ENCODE measurements at regions of chr20 and their contacts with region 1.

Region 1: GRCh38 chr20:53216856-53217576 is 244.9 kb downstream of the TSHZ2 start:
- DNase-seq: peak; percentile 54
- H3K4me3 Mint-ChIP-seq: peak overlapping the region; percentile 30
- H3K27ac Mint-ChIP-seq: no peak overlapping the region
- H3K4me1 Mint-ChIP-seq: no peaks in the 10 kb centered on the region
- H3K27me3 Mint-ChIP-seq: no peaks in the 10 kb centered on the region
- CTCF ChIP-seq: peak; percentile 89

Region 2: GRCh38 chr20:52379723-52380336 is 837.2 kb before region 1 on chr20:
- CTCF ChIA-PET with region 1: interaction called, 3 read pairs
- POLR2A ChIA-PET with region 1: no interaction called
- intact Hi-C with region 1: loop called (anchors 2 kb)
- DNase-seq: peak; percentile 36
- H3K4me3 Mint-ChIP-seq: no peak overlapping the region
- H3K27ac Mint-ChIP-seq: no peak overlapping the region
- H3K4me1 Mint-ChIP-seq: no peaks in the 10 kb centered on the region
- H3K27me3 Mint-ChIP-seq: peaks cover 21% of the 10 kb centered on the region
- CTCF ChIP-seq: peak; percentile 88

Region 3: DNA sequence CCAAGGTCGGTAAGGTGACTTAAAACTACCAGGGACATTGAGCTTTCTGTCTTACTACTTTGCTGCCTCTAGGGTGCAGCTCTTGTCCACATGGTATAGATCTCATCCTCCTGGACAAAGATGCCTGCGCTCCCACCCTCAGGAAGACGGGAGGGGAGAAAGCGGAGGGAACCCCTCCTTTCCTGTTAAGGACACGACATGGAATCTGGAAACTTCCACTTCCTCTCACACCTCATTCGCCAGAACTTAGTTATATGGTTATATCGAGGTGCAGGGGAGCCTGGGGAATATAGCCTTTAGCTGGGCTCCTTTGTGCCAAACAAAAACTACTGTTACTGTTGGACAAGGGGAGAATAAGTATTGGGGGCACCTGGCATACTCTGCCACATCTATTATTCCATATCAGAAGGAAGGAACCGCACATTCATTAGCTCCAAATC is 469.2 kb before region 1 on chr20:
- CTCF ChIA-PET with region 1: interaction called, 29 read pairs
- POLR2A ChIA-PET with region 1: no interaction called
- intact Hi-C with region 1: loop called (anchors 1 kb)
- DNase-seq: peak; percentile 13
- H3K4me3 Mint-ChIP-seq: no peak overlapping the region
- H3K27ac Mint-ChIP-seq: no peak overlapping the region
- H3K4me1 Mint-ChIP-seq: no peaks in the 10 kb centered on the region
- H3K27me3 Mint-ChIP-seq: peaks cover 16% of the 10 kb centered on the region
- CTCF ChIP-seq: peak; percentile 47

Region 4: DNA sequence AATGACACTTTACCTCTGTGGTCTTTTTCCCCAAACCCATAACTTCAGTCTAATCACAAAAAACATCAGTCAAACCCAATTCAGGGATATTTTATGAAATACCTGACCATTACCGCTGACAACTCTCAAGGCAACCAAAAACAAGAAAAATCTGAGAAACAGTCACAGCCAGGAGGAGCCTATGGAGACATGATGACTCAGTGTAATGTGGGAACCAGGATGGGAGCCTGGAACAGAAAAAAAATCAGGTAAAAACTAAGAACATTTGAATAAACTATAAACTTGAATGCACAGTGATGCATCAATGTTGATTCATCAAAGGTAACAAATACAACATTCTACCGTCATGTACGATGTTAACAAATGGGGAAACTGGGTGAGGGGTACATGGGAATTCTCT is 328.9 kb before region 1 on chr20:
- CTCF ChIA-PET with region 1: no interaction called
- POLR2A ChIA-PET with region 1: no interaction called
- intact Hi-C with region 1: no loop called
- DNase-seq: no peak
- H3K4me3 Mint-ChIP-seq: no peak overlapping the region
- H3K27ac Mint-ChIP-seq: no peak overlapping the region
- H3K4me1 Mint-ChIP-seq: no peaks in the 10 kb centered on the region
- H3K27me3 Mint-ChIP-seq: no peaks in the 10 kb centered on the region
- CTCF ChIP-seq: no peak

Region 5: DNA sequence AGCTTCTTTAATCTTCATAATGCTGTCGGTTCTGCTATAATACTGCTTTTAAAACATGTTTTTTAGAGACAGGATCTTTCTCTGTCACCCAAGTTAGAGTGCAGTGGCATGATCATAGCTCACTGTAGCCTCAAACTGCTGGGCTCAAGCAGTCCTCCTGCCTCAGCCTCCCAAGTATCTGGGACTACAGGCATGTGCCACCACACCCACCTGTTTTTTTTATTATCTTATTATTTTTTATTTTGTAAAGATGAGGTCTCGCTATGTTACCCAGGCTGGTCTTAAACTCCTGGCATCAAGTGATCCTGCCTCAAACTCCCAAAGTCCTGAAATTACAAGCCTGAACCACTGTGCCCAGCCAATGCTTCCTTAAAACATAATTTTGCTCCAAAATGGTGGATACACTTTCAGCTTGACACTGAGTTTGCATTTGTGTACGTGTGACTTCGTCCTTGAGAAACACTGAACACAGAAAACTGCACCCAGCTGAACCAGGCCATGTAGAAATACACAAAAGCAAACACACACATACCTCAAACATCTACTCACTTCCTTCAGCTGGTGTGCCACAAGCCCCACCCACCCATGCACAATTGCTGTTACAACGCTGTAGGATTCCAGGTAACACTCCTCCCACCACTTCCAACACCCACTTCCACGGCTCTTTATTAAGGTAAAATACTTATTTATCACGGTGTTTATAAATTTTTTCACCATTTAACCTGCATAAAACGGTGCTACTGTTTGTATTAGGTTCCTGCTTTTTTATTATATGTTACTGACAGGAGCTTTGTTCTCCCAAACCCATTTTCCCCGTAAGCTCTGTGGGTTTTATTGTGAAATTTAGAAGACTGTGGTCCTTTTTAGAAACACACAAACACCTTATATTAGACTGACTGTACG is 135.8 kb before region 1 on chr20:
- CTCF ChIA-PET with region 1: interaction called, 10 read pairs
- POLR2A ChIA-PET with region 1: no interaction called
- intact Hi-C with region 1: no loop called
- DNase-seq: peak; percentile 82
- H3K4me3 Mint-ChIP-seq: peak overlapping the region; percentile 59
- H3K27ac Mint-ChIP-seq: peak overlapping the region; percentile 90
- H3K4me1 Mint-ChIP-seq: peaks cover 16% of the 10 kb centered on the region
- H3K27me3 Mint-ChIP-seq: no peaks in the 10 kb centered on the region
- CTCF ChIP-seq: no peak

Region 6: DNA sequence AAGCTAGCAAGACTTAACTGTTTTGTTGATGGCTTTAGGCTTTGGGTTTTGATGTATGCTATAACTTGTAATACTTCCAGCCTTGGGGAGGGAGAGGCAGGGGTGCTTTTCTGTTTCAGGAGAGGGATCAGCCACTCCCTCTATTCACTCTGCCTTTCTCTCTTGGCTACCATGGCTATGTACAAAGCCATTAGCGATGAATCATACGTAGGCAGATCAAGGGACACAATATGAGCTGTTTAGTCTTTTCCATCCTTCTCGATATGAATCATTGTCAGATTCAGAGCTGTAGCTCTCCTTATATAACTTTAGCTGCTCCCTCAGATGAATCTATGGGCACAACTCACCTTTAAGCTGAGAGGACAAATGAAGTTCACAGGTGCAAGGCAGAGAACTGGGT is 14.2 kb before region 1 on chr20:
- CTCF ChIA-PET with region 1: interaction called, 24 read pairs
- POLR2A ChIA-PET with region 1: interaction called, 3 read pairs
- intact Hi-C with region 1: no loop called
- DNase-seq: peak; percentile 11
- H3K4me3 Mint-ChIP-seq: no peak overlapping the region
- H3K27ac Mint-ChIP-seq: no peak overlapping the region
- H3K4me1 Mint-ChIP-seq: no peaks in the 10 kb centered on the region
- H3K27me3 Mint-ChIP-seq: no peaks in the 10 kb centered on the region
- CTCF ChIP-seq: no peak